ENCODE measurements at regions of chr1 and their contacts with region 1.

Region 1: GRCh38 chr1:204128964-204129896 is 22.6 kb downstream of the ETNK2 start:
- DNase-seq: peak; percentile 93
- H3K4me3 ChIP-seq: peak overlapping the region; percentile 4 to 39; a peak in 2 of 4 replicates
- H3K27ac ChIP-seq: peak overlapping the region in 1 of 2 experiments; percentile 93; a peak in 2 of 4 replicates
- H3K4me1 ChIP-seq: peaks cover 33 to 59% of the 10 kb centered on the region in 2 experiments
- H3K27me3 ChIP-seq: no peaks in the 10 kb centered on the region
- CTCF ChIP-seq: peak; percentile 83
- EP300 ChIP-seq: no peak
- RAD21 ChIP-seq: peak; percentile 73

Region 2: DNA sequence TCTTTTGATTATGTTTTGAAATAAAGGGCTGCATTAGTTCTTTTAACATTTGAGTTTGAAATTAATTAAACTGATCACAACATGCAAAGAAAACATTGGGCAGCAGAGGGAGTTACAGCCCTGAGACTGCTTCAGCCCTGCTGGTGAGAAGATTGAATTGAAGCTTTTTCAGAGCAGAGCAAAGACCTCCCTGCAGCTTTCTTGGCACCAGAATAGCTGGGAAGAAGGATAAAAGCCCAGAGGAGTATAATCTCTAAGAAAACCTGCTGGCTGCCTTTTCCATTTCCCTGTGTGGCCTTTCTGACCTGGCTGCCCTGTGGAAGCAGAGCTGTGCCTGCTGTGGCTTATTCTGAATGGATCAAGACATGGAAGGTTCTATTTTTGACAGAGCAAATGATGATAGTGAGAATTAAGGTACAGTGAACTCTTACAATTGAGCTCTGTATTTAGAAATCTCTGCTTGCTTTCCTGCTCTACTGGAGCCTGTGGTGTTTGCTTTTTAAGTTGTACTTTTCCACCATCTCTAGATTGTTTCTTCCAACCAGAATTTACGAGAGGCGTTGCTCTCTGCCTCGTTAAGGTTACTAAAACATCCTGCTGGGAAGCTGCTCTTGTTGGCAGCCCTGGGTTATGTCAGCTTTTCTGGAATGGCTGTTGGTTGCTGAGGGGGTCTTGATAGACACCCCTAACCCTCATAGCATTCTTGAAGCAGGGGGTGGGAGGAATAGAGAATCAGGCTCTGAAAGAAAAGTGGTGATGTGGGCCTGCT is 257.9 kb before region 1 on chr1:
- CTCF ChIA-PET with region 1: interaction called, 421 read pairs
- POLR2A ChIA-PET with region 1: interaction called, 13 read pairs
- DNase-seq: peak; percentile 70
- H3K4me3 ChIP-seq: no peak overlapping the region; a peak in 1 of 4 replicates
- H3K27ac ChIP-seq: 0 out of 4 replicates have a peak overlapping the region, but pooled peaks of 1 of the 2 experiments have one; percentile 9
- H3K4me1 ChIP-seq: 0 out of 4 replicates have a peak, but pooled peaks cover 0 to 5% of the 10 kb centered on the region in 2 experiments
- H3K27me3 ChIP-seq: no peaks in the 10 kb centered on the region
- CTCF ChIP-seq: peak; percentile 96
- EP300 ChIP-seq: no peak
- RAD21 ChIP-seq: peak; percentile 88

Region 3: GRCh38 chr1:204072931-204073836 is 56.0 kb before region 1 on chr1 and contains the start of gene SOX13:
- CTCF ChIA-PET with region 1: interaction called, 31 read pairs
- POLR2A ChIA-PET with region 1: interaction called, 8 read pairs
- DNase-seq: peak; percentile 92
- H3K4me3 ChIP-seq: peak within 1 kb of the TSS; percentile 71 to 80
- H3K27ac ChIP-seq: peak within 1 kb of the TSS; percentile 44 to 57; a peak in 2 of 4 replicates
- H3K4me1 ChIP-seq: peaks cover 0 to 9% of the 10 kb centered on the region in 2 experiments; a peak in 1 of 4 replicates
- H3K27me3 ChIP-seq: no peaks in the 10 kb centered on the region
- CTCF ChIP-seq: peak; percentile 25
- EP300 ChIP-seq: no peak
- RAD21 ChIP-seq: peak; percentile 30; the same call in 1 of the 2 replicates
- polyA plus RNA-seq, gene SOX13: 7.2 and 10.6 TPM in 2 replicates

Region 4: GRCh38 chr1:204104133-204104871 is 24.9 kb before region 1 on chr1:
- CTCF ChIA-PET with region 1: interaction called, 20 read pairs
- POLR2A ChIA-PET with region 1: no interaction called
- DNase-seq: no peak
- H3K4me3 ChIP-seq: no peak overlapping the region
- H3K27ac ChIP-seq: no peak overlapping the region
- H3K4me1 ChIP-seq: peaks cover 10 to 12% of the 10 kb centered on the region in 2 experiments; a peak in 2 of 4 replicates
- H3K27me3 ChIP-seq: no peaks in the 10 kb centered on the region
- CTCF ChIP-seq: no peak
- EP300 ChIP-seq: 0 out of 4 replicates have a peak, but pooled peaks of 1 of the 2 experiments have one; percentile 11
- RAD21 ChIP-seq: no peak

Region 5: DNA sequence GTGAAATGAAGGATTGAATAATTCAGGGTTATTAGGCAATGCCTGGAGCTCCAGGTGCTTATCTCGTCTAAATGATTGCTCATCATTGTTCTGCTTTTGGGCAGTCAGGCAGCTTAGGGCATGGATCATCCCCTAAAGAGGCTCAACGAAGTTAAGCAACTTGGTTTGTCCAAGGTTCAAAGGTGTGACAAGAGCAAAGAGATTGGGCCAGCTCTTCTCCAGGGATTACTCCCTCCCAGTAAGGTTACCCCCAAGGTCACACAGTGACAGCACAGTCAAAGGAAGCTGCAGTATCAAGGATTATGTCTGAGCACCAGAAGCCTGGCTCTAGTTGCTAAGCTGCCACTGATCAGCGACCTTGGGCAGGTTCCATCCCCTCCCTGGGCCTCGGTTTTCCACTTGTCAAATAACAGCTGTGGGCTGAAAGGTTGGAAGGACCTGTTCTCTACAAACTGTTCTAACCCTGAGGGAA is 15.8 kb after region 1 on chr1:
- CTCF ChIA-PET with region 1: interaction called, 51 read pairs
- POLR2A ChIA-PET with region 1: no interaction called
- DNase-seq: no peak
- H3K4me3 ChIP-seq: no peak overlapping the region
- H3K27ac ChIP-seq: no peak overlapping the region
- H3K4me1 ChIP-seq: no peaks in the 10 kb centered on the region; a peak in 1 of 4 replicates
- H3K27me3 ChIP-seq: no peaks in the 10 kb centered on the region
- CTCF ChIP-seq: no peak
- EP300 ChIP-seq: no peak
- RAD21 ChIP-seq: no peak

Measured in SK-N-SH (cell line).